ENCODE measurements at regions of chr7 and their contacts with region 1.

Region 1: DNA sequence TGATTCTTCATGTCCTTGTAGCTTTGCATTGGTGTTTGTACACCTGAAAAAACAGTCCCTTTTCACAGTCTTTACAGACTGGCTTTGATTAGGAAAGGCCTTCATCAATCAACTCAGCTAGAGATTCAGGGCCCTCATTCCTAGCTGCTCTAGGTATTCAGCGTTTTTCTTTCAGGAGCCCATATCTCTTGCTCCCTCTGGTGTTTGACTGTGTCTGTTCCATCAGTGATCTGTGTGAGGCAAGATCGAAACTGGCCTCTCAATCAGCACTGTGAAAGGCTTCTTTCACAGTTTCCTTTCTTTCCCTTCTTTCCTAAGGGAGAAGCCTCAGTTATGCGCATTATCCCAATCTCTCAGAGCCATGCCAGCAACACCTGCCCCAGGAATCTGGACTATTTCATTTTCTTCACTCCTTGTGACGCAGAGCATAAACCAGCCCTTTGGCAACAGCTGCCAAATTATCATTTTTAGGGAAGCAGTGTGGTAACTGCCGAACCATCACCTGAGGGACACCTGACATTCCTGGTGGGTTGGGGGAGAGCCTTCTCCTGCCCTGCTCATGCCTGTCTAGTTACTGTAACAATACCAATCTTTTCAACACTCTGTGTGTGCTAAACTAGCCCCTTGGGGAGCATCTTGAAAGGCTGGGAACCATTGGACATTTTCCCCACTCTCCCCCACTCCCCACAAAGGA is 75.7 kb upstream of the CCDC71L start:
- DNase-seq: peak; percentile 55
- H3K4me3 Mint-ChIP-seq: no peak overlapping the region
- H3K27ac Mint-ChIP-seq: peak overlapping the region; percentile 73
- H3K4me1 Mint-ChIP-seq: peaks cover 47% of the 10 kb centered on the region
- H3K27me3 Mint-ChIP-seq: no peaks in the 10 kb centered on the region

Region 2: GRCh38 chr7:106041140-106041717 is 695.4 kb before region 1 on chr7:
- CTCF ChIA-PET with region 1: no interaction called
- POLR2A ChIA-PET with region 1: no interaction called
- intact Hi-C with region 1: no loop called
- DNase-seq: peak; percentile 52
- H3K4me3 Mint-ChIP-seq: no peak overlapping the region
- H3K27ac Mint-ChIP-seq: no peak overlapping the region
- H3K4me1 Mint-ChIP-seq: peaks cover 23% of the 10 kb centered on the region
- H3K27me3 Mint-ChIP-seq: peaks cover 2% of the 10 kb centered on the region

Region 3: GRCh38 chr7:106285051-106285854 is 451.4 kb before region 1 on chr7:
- CTCF ChIA-PET with region 1: interaction called, 7 read pairs
- POLR2A ChIA-PET with region 1: interaction called, 3 read pairs
- intact Hi-C with region 1: loop called (anchors 10 kb)
- DNase-seq: peak; percentile 100
- H3K4me3 Mint-ChIP-seq: peak overlapping the region; percentile 92
- H3K27ac Mint-ChIP-seq: peak overlapping the region; percentile 99
- H3K4me1 Mint-ChIP-seq: peaks cover 50% of the 10 kb centered on the region
- H3K27me3 Mint-ChIP-seq: peaks cover 2% of the 10 kb centered on the region

Region 4: DNA sequence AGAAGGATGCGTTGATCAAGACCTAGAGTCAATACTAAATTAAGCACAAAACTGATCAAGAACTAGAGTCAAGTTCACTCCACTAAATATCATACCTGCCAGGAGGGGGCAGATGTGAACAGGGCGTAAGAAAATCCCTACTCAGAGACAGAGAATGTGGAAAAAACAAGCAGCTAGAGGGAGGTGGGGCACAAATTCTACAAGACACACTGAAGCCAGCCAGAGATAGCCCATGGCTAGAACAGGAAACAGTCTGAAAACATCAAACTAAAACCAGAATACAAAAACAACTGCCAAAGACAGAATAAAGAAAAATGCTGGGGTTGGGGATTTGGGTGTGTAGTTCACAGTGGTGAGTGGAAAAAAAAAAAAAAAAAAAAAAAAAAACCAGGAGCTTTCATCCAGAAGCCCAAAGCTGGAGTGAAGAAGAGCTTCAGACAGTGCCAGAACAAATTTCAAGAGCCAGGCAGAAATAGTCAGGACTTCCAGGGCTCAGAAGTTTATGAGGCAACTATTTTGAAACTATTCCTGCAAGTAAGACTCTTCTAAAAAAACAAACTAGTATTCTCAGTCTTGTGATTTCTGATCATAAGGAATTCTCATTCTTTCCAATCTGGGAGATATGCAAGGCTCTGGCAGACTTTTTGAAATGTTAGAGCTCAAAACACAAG is 194.0 kb before region 1 on chr7:
- CTCF ChIA-PET with region 1: interaction called, 102 read pairs
- POLR2A ChIA-PET with region 1: interaction called, 3 read pairs
- intact Hi-C with region 1: loop called (anchors 1 kb)
- DNase-seq: peak; percentile 64
- H3K4me3 Mint-ChIP-seq: no peak overlapping the region
- H3K27ac Mint-ChIP-seq: peak overlapping the region; percentile 11
- H3K4me1 Mint-ChIP-seq: peaks cover 22% of the 10 kb centered on the region
- H3K27me3 Mint-ChIP-seq: no peaks in the 10 kb centered on the region

Region 5: GRCh38 chr7:106671160-106671559 is 65.5 kb before region 1 on chr7:
- CTCF ChIA-PET with region 1: interaction called, 268 read pairs
- POLR2A ChIA-PET with region 1: no interaction called
- intact Hi-C with region 1: no loop called
- DNase-seq: no peak
- H3K4me3 Mint-ChIP-seq: no peak overlapping the region
- H3K27ac Mint-ChIP-seq: no peak overlapping the region
- H3K4me1 Mint-ChIP-seq: peaks cover 9% of the 10 kb centered on the region
- H3K27me3 Mint-ChIP-seq: no peaks in the 10 kb centered on the region

Region 6: DNA sequence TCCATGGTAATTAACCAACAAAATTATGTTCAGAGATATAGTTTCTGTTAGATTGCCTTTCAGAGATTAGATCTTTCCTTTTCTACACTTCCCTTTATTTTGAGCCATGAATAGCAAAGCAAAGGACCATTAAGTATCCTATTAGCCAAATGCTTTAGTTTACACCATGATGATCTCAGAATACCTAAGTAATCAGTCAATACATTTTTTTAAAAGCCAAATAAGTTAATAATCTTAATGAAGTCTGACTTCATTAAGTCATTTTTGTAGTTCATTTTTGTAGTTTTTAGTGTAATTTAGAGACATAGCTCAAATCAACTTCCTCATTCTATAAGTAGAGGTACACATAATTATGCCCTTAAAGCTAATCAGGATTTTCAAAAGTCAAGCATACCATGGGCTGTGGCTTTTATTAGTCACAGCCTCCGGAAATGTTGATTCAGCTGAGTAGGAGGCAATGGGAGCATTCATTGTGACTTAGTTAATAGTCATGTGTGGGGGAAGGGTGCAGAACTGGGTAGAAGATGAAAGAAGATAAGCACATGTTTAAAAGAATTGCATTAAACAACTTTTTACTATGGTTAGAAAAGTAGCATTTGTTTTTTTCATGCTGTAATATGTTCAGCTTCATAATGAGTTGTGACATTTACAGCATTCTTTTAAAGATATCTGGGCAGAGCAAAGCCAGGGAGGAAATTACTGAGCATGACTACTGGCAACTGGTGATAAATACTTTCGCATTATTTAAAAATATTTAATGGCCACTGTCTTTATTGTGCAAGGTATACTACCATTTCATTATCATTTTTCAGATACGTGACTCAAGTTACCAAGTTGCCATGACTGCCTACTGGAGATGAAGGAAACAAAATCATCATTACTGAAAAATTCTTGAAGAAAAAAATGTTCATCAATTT is 18.4 kb before region 1 on chr7:
- CTCF ChIA-PET with region 1: interaction called, 17 read pairs
- POLR2A ChIA-PET with region 1: no interaction called
- intact Hi-C with region 1: loop called (anchors 1 kb)
- DNase-seq: peak; percentile 90
- H3K4me3 Mint-ChIP-seq: no peak overlapping the region
- H3K27ac Mint-ChIP-seq: no peak overlapping the region
- H3K4me1 Mint-ChIP-seq: peaks cover 12% of the 10 kb centered on the region
- H3K27me3 Mint-ChIP-seq: no peaks in the 10 kb centered on the region

Measured in activated CD4-positive, alpha-beta memory T cell treated with anti-CD3 and anti-CD28 coated beads for 36 hours (primary cell).